Common myeloid progenitor, CD34-positive (primary cell): ENCODE measurements at regions of chr6 and their contacts with region 1.

Region 1: DNA sequence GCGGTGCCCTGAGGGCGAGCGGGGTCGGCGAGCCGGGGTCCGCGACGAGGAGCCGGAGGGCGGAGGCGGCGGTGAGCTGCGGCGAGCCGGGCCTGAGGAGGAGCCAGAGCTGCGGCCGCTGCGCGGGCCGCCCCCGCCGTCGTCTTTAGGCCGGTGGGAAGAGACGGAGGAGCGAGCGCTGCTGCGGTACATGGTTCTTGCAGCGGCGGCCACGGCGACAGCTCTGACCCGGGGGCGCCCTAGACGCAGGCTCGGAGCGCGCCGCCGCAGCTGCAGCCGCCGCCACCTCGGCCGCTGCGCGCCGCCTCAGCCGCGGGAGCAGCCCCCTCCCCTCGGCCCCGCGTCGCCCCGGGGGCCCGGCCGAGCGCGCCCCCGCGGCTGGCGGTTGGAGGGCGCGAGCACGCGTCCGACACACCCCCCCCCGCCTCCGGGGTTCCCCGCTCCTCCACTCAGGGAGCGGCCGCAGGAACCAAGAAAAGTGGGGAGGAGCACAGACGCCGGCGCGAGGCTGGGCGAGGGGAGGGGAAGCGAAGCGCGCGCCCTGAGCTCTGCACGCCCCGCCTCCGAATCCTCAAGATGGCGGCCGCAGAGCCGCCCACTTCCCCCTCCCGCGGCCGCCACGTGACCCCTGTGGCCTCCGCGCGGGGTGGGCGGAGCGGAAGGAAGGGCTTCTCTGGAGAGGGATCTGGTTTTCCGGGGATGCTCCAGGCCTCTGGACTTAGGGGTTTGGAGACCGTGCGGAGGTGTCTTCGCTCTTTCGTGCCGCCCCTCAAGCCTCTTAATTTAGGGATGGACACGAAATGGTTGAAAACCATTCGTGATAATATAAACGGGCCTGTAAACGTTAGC is at the start of gene ZNF318:
- DNase-seq: peak; percentile 92 to 96 (median 96)
- H3K4me3 ChIP-seq: peak within 1 kb of the TSS; percentile 50 to 86 (median 75)
- H3K27ac ChIP-seq: peak within 1 kb of the TSS in 1 of 2 experiments; percentile 72
- H3K4me1 ChIP-seq: peaks cover 0 to 25% (median 18%) of the 10 kb centered on the region in 4 experiments
- H3K27me3 ChIP-seq: peaks cover 0 to 16% (median 12%) of the 10 kb centered on the region in 5 experiments

Region 2: DNA sequence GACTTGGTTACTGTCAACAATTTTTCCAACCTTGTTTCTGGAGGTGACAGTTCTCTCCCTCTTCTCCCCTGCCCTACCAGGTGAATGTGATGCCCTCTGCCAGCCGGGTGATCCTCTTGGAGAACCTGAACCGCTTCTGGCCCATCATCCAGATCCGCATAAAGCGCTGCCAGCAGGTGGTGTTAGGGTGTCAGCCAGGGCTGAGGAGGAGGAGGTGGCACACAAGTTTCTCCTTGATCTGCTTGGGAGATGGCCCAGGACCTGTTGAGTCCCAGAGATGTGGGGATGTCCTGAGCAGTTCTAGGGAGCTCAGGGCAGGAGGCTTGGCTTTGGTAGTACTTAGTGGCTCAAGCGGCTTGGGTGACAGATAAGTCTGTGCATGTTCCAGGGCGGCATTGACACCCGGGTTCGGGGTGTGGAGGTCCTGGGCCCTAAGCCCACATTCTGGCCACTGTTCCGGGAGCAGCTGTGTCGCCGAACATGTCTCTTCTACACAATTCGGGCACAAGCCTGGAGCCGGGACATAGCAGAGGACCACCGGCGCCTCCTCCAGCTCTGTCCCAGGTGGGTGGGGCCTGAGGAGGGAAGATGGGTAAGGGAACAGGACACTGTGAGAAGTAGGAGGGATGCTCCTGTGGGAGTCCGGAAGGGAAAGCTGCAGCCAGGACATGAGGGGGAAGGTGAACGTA is 166.2 kb before region 1 on chr6:
- CTCF ChIA-PET with region 1: no interaction called
- POLR2A ChIA-PET with region 1: no interaction called
- DNase-seq: no peak
- H3K4me3 ChIP-seq: no peak overlapping the region
- H3K27ac ChIP-seq: no peak overlapping the region
- H3K4me1 ChIP-seq: no peaks in the 10 kb centered on the region
- H3K27me3 ChIP-seq: no peaks in the 10 kb centered on the region

Region 3: GRCh38 chr6:43355862-43356590 is 13.4 kb before region 1 on chr6:
- CTCF ChIA-PET with region 1: interaction called, 20 read pairs
- POLR2A ChIA-PET with region 1: no interaction called
- DNase-seq: peak; percentile 19 to 60 (median 53)
- H3K4me3 ChIP-seq: no peak overlapping the region
- H3K27ac ChIP-seq: no peak overlapping the region
- H3K4me1 ChIP-seq: no peaks in the 10 kb centered on the region
- H3K27me3 ChIP-seq: no peaks in the 10 kb centered on the region

Region 4: DNA sequence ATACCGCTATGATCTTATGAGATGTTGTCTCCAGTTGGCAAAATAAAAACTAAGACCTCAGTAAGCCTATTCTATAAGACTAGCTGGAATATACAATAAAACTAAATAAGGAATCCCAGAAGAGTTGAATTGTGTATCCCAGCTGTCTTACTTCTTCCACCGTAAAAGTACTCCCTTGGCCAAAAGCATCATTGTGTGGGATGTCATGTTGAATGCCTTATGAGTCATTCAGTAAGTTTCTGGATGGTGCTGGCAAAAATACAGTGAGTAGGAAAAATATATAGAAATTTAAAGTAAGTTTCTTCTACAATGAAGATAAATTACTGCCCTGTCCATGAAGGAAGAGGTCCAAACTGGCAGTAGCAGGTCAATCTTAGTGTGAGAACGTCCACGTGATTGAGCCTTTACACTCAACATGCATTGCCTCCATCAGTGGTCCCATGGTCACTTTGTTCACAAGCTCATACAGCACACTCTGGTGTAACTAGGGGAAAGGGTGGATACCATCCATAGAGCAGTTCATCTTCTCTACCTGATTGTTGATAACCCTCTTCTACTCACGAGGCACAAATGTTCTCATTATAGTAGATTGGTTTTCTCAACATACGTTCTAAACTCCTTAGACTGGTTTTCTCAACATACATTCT is 13.7 kb after region 1 on chr6:
- CTCF ChIA-PET with region 1: interaction called, 11 read pairs
- POLR2A ChIA-PET with region 1: interaction called, 3 read pairs
- DNase-seq: no peak
- H3K4me3 ChIP-seq: no peak overlapping the region
- H3K27ac ChIP-seq: no peak overlapping the region
- H3K4me1 ChIP-seq: peaks cover 9 to 20% (median 15%) of the 10 kb centered on the region in 4 experiments
- H3K27me3 ChIP-seq: peaks cover 5 to 78% (median 35%) of the 10 kb centered on the region in 5 experiments